ENCODE measurements at regions of chr19 and their contacts with region 1.

Region 1: GRCh38 chr19:45178262-45179071 is at the start of gene BLOC1S3:
- DNase-seq: peak; percentile 100
- H3K4me3 Mint-ChIP-seq: peak within 1 kb of the TSS; percentile 80
- H3K27ac Mint-ChIP-seq: peak within 1 kb of the TSS; percentile 86
- H3K4me1 Mint-ChIP-seq: peaks cover 44% of the 10 kb centered on the region
- H3K27me3 Mint-ChIP-seq: no peaks in the 10 kb centered on the region
- total RNA-seq, gene BLOC1S3: 5.1 to 6.5 TPM

Region 2: GRCh38 chr19:44746946-44747738 is 431.3 kb before region 1 on chr19:
- CTCF ChIA-PET with region 1: no interaction called
- intact Hi-C with region 1: loop called (anchors 5 kb)
- DNase-seq: peak; percentile 97
- H3K4me3 Mint-ChIP-seq: peak overlapping the region; percentile 87
- H3K27ac Mint-ChIP-seq: peak overlapping the region; percentile 95
- H3K4me1 Mint-ChIP-seq: peaks cover 56% of the 10 kb centered on the region
- H3K27me3 Mint-ChIP-seq: no peaks in the 10 kb centered on the region

Region 3: GRCh38 chr19:44954824-44955586 is 223.5 kb before region 1 on chr19 and contains the start of gene CLPTM1:
- CTCF ChIA-PET with region 1: no interaction called
- intact Hi-C with region 1: loop called (anchors 1 kb)
- DNase-seq: peak; percentile 98
- H3K4me3 Mint-ChIP-seq: peak within 1 kb of the TSS; percentile 98
- H3K27ac Mint-ChIP-seq: peak within 1 kb of the TSS; percentile 98
- H3K4me1 Mint-ChIP-seq: peaks cover 48% of the 10 kb centered on the region
- H3K27me3 Mint-ChIP-seq: no peaks in the 10 kb centered on the region
- total RNA-seq, gene CLPTM1: 32.4 to 34.6 TPM

Region 4: GRCh38 chr19:45079063-45079910 is 99.2 kb before region 1 on chr19 and contains the start of gene GEMIN7:
- CTCF ChIA-PET with region 1: no interaction called
- intact Hi-C with region 1: loop called (anchors 5 kb)
- DNase-seq: peak; percentile 82
- H3K4me3 Mint-ChIP-seq: peak within 1 kb of the TSS; percentile 96
- H3K27ac Mint-ChIP-seq: peak within 1 kb of the TSS; percentile 76
- H3K4me1 Mint-ChIP-seq: peaks cover 50% of the 10 kb centered on the region
- H3K27me3 Mint-ChIP-seq: no peaks in the 10 kb centered on the region
- total RNA-seq, gene GEMIN7: 14.7 to 15.4 TPM

Region 5: DNA sequence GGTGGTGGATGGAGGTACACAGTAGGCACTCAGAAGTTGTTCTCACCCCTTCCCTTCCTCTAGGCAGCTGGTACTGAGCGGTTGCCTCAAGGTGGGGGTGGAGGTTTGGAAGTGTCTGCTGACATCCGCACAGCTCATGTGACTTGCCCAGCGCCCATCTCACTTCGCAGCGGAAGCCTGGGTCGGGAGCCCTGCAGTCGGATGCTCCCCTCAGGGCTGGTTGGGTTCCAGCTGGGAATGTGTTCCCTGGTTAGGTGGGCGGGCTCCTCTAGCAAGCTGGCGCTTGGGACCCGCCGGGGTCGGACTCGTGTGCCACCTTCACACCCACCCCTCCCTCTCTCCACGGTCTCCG is 75.3 kb before region 1 on chr19:
- CTCF ChIA-PET with region 1: no interaction called
- intact Hi-C with region 1: no loop called
- DNase-seq: peak; percentile 63
- H3K4me3 Mint-ChIP-seq: peak overlapping the region; percentile 14
- H3K27ac Mint-ChIP-seq: no peak overlapping the region
- H3K4me1 Mint-ChIP-seq: peaks cover 49% of the 10 kb centered on the region
- H3K27me3 Mint-ChIP-seq: no peaks in the 10 kb centered on the region

Region 6: DNA sequence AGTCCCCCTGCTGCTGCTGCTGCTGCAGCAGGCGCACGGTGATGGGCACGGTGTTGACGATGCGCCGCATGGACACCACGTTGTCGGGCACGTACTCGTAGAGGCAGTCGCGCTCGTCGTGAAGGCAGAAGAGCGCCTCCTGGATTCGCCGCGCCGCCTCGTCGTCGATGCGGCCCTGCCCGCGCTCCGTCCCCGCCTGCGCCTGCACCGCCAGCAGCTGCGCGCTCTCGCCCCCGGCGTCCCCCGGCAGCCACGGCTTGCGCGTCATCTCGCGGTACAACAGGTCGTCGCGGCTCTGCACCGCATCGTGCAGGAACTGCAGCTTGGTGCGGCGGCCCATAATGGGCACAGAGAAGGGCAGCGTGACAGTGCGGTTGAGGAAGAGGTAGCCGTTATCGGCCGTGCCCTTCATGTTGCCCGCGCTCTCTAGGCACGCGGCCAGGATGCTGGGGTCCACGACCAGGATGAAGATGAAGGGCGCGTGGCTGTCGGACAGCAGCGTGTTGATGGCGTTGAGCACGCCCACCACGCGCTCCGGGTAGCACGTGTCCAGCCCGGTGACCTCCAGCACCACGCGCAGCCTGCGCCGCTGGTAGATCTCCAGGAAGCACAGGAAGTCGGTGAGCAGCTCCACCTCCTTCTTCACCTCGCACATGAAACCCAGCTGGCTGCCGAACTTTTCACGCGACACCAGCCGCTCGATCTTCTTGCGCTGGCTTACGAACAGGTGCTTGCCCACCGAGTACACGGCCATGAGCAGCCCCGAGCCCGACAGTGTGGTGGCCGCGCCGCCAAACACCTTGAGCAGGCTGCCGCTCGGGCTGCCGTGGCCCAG is 25.7 kb before region 1 on chr19:
- CTCF ChIA-PET with region 1: interaction called, 3 read pairs
- intact Hi-C with region 1: loop called (anchors 1 kb)
- DNase-seq: peak; percentile 67
- H3K4me3 Mint-ChIP-seq: peak overlapping the region; percentile 54
- H3K27ac Mint-ChIP-seq: no peak overlapping the region
- H3K4me1 Mint-ChIP-seq: peaks cover 18% of the 10 kb centered on the region
- H3K27me3 Mint-ChIP-seq: peaks cover 27% of the 10 kb centered on the region

Region 7: GRCh38 chr19:45323671-45324081 is 145.2 kb after region 1 on chr19:
- CTCF ChIA-PET with region 1: no interaction called
- intact Hi-C with region 1: no loop called
- DNase-seq: no peak
- H3K4me3 Mint-ChIP-seq: no peak overlapping the region
- H3K27ac Mint-ChIP-seq: no peak overlapping the region
- H3K4me1 Mint-ChIP-seq: no peaks in the 10 kb centered on the region
- H3K27me3 Mint-ChIP-seq: peaks cover 26% of the 10 kb centered on the region

Region 8: DNA sequence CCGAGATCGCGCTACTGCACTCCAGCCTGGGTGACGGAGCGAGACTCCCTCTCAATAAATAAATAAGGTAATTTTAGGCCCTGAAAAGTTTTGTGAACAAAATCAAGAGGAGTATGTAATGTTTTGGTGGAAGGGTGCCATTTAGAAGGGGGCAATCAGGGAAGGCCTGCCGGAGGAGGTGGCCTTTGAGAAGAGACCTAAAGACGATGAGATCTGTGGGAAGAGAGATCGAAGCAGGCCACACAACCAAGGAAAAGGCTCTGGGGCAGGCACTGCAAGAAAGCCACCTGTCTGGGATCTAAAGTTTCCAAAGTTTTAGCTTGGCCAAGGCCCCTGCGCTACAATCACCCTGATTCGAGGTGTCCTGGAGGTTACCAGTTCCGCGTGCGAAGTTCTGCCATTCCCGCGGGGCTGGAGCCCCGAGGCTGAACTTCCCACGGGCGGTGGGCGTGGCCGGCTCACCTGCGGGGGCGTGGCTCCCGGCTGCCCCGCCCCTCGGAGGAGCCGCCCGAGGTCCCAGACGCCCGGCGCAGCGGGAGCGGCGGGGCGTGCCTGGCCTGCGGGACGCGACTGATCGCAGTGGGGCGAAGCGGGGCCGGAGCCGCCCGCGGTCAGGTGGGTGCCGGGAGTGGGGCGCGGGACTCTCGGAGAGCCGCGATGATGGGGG is 161.9 kb after region 1 on chr19 and contains the start of gene KLC3:
- CTCF ChIA-PET with region 1: interaction called, 3 read pairs
- intact Hi-C with region 1: loop called (anchors 1 kb)
- DNase-seq: peak; percentile 19
- H3K4me3 Mint-ChIP-seq: peak within 1 kb of the TSS; percentile 38
- H3K27ac Mint-ChIP-seq: no peak within 1 kb of the TSS
- H3K4me1 Mint-ChIP-seq: peaks cover 4% of the 10 kb centered on the region
- H3K27me3 Mint-ChIP-seq: peaks cover 18% of the 10 kb centered on the region
- total RNA-seq, gene KLC3: not detected

Measured in activated naive CD4-positive, alpha-beta T cell treated with anti-CD3 and anti-CD28 coated beads for 36 hours (primary cell).